ENCODE measurements at regions of chr1 and their contacts with region 1.

Region 1: DNA sequence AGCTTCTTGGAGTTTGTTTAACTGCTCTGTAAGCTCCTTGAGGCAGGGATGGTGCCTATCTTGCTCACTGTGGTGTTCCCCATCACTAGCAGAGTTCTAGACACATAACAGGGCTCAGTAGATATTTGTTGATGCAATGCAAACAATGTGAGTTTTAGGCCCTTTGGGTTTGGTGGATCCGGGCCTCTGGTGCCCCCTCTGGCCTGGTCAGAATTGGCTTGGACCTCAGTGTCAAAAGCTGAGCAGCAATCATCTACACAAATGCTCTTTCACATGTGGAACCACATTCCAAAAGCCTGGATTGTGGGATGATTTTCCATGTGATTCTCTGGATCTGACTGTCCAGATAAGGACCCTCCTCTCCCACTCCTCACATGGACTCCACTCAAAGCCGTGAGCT is 53.4 kb upstream of the BCAR3 start:
- DNase-seq: peak; percentile 41
- ATAC-seq: peak; percentile 90
- H3K4me3 ChIP-seq: no peak overlapping the region
- H3K27ac ChIP-seq: no peak overlapping the region
- H3K4me1 ChIP-seq: peaks cover 21% of the 10 kb centered on the region
- H3K27me3 ChIP-seq: no peaks in the 10 kb centered on the region
- CTCF ChIP-seq: peak; percentile 51
- EP300 ChIP-seq: no peak
- POLR2A ChIP-seq: no peak
- RAD21 ChIP-seq: peak; percentile 47; the same call in 1 of the 2 replicates

Region 2: DNA sequence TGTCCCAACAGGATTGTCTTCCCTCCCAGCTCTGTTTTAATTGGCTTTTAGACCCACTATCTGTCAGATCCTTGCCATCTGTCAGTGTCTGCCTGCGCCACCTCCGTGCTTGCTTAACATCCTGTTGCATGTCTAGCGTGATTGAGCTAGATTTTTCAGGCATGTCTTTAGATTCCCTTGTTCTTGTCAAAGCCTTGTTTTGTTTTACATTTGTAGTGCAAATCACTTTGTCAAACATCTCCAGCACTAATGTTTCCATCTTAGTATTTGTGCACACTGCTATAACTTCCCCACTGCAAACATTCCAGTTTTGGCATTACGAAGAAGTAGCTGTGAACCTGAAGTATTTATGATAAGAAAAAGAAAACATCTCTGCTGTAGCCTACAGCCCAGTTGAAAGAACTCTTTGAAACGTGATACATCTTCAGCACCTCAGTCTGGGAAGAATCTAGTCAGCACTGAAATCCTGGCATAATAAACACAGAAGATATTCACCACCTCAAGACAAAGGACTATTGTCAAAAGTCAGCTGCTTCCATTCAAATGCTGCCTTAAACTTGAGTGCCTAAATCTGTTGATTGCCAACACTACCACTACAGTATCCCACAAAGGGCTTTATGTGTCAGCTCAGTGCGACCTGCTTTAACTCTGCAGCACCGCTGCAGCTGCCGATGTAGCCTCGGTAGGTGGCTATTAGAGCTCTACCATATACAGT is 182.1 kb before region 1 on chr1:
- CTCF ChIA-PET with region 1: no interaction called
- POLR2A ChIA-PET with region 1: no interaction called
- in situ Hi-C with region 1: no loop called
- intact Hi-C with region 1: no loop called
- DNase-seq: peak; percentile 71
- ATAC-seq: peak; percentile 77
- H3K4me3 ChIP-seq: no peak overlapping the region
- H3K27ac ChIP-seq: peak overlapping the region; percentile 0
- H3K4me1 ChIP-seq: peaks cover 41% of the 10 kb centered on the region
- H3K27me3 ChIP-seq: no peaks in the 10 kb centered on the region; a peak in 1 of 5 replicates
- CTCF ChIP-seq: no peak
- EP300 ChIP-seq: no peak
- POLR2A ChIP-seq: no peak
- RAD21 ChIP-seq: no peak

Region 3: GRCh38 chr1:93585059-93585966 is 149.7 kb before region 1 on chr1:
- CTCF ChIA-PET with region 1: no interaction called
- POLR2A ChIA-PET with region 1: no interaction called
- in situ Hi-C with region 1: no loop called
- intact Hi-C with region 1: no loop called
- DNase-seq: peak; percentile 89
- ATAC-seq: peak; percentile 84
- H3K4me3 ChIP-seq: no peak overlapping the region
- H3K27ac ChIP-seq: peak overlapping the region; percentile 51
- H3K4me1 ChIP-seq: peaks cover 55% of the 10 kb centered on the region
- H3K27me3 ChIP-seq: no peaks in the 10 kb centered on the region
- CTCF ChIP-seq: no peak
- EP300 ChIP-seq: peak in 1 of 2 experiments; percentile 81; a peak in 2 of 4 replicates
- POLR2A ChIP-seq: 0 out of 4 replicates have a peak, but pooled peaks of 1 of the 2 experiments have one; percentile 32
- RAD21 ChIP-seq: 0 out of 2 replicates have a peak, but pooled peaks have one; percentile 17

Region 4: DNA sequence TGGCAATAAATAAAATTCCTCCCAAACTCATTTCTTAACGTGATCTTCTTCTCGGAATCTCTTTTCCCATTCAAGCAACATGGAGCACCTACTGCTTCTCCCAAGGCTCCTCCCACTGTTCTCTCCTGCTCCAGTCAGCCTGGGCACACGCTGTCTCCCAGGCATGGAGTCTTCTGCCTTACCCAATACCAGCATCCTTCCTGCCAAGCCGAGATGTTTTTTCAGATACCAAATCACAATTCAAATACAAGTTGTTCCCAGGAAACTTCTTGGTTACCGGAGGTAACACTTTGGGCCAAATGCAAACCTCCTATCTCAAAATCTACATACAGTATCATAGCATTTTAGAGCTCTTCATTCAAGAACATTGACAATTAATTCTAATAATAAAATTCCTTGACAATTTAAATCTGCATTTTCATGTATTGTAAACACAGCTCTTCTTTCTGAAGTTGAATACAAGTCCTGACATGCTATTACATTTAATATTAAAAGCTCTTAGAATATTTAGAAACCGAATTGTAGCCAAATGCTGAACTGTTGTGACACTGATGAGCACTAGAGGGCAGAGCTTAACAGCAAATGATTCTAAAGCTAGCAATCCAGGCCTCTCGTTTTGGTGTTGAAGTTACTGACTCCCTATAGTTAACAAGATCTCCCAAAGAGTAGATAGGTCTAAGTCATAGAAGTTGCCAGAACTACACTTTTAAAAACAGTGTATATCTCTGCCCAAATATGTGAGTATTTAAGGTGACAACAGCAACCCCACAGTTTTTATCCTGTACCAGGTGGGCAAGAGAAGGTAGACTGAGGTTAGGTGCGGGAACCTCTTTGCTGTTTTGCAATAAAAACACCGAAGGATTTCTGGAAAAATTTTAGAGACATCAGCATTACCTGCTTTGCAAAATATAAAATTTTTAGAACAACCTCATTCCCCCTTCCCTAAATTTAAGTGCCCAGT is 105.6 kb before region 1 on chr1:
- CTCF ChIA-PET with region 1: no interaction called
- POLR2A ChIA-PET with region 1: no interaction called
- in situ Hi-C with region 1: no loop called
- intact Hi-C with region 1: loop called (anchors 2 kb)
- DNase-seq: peak; percentile 65
- ATAC-seq: peak; percentile 71
- H3K4me3 ChIP-seq: no peak overlapping the region
- H3K27ac ChIP-seq: no peak overlapping the region
- H3K4me1 ChIP-seq: peaks cover 26% of the 10 kb centered on the region
- H3K27me3 ChIP-seq: no peaks in the 10 kb centered on the region
- CTCF ChIP-seq: peak; percentile 84
- EP300 ChIP-seq: no peak
- POLR2A ChIP-seq: no peak
- RAD21 ChIP-seq: peak; percentile 89